ENCODE measurements at regions of chr12 and their contacts with region 1.

Region 1: DNA sequence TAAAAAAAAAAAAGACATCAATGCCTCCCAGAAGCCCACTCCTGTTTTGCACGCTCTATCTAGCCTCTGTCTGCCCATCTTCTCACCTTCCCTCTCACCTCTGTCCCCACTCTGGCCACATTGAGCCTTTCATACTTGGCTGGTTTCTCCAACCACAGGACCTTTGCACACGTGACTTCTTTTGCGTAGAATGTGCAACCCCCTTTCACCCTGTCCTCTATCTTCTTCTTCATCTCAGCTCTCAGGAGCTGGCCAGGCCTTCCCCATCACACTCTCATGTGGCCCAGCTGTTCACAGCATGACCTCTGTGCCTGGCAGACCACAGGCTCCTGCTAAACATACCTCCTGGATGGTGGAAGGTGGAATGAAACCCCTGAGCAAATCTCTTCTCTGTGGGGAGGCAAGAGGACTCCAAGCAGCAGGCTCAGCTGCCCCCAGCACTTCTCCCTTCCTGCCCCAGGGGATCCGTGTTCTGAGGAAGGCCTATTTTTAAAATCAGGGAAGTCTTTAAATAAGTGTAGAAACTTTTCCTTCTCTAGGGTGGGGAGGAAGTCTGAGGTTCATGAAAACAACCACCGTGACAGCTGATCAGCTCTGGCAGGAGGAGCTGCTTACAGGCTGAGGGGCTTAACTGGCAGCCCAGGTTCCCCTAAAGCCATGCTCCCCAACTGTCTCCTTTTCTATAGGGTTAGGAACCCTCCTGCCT is 11.6 kb downstream of the HVCN1 start:
- DNase-seq: peak; percentile 97
- ATAC-seq: peak; percentile 89
- H3K4me3 ChIP-seq: peak overlapping the region; percentile 42
- H3K27ac ChIP-seq: peak overlapping the region; percentile 87
- H3K4me1 ChIP-seq: peaks cover 72% of the 10 kb centered on the region
- H3K27me3 ChIP-seq: no peaks in the 10 kb centered on the region
- CTCF ChIP-seq: no peak
- EP300 ChIP-seq: peak; percentile 50 to 81; a peak in 3 of 4 replicates
- POLR2A ChIP-seq: 0 out of 2 replicates have a peak, but pooled peaks have one; percentile 38
- RAD21 ChIP-seq: no peak

Region 2: DNA sequence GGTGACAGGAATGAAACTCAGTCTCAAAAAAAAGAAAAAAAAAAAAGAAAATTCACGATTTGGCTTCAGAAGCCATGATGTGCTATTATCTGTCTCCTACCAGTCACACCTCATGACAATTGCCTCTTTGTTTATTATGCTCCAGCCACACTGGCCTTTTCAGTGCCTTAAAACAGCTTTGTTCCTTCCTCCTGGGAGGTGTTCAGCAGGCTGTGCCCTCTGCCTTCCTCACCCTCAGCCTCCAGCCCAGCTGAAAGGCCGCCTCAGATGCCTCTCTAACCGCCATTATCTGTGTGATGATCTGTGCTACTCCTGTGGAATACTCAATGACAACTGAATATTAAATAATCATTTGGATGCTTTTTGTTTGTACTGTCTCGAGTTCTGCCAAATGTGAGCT is 218.6 kb before region 1 on chr12:
- CTCF ChIA-PET with region 1: no interaction called
- POLR2A ChIA-PET with region 1: interaction called, 10 read pairs
- RAD21 ChIA-PET with region 1: no interaction called
- SMC1A ChIA-PET with region 1: no interaction called
- in situ Hi-C with region 1: no loop called
- intact Hi-C with region 1: no loop called
- DNase-seq: no peak
- ATAC-seq: no peak
- H3K4me3 ChIP-seq: no peak overlapping the region
- H3K27ac ChIP-seq: no peak overlapping the region
- H3K4me1 ChIP-seq: peaks cover 17% of the 10 kb centered on the region
- H3K27me3 ChIP-seq: no peaks in the 10 kb centered on the region
- CTCF ChIP-seq: no peak
- EP300 ChIP-seq: no peak
- POLR2A ChIP-seq: no peak
- RAD21 ChIP-seq: no peak

Region 3: GRCh38 chr12:110627500-110628195 is 49.7 kb before region 1 on chr12:
- CTCF ChIA-PET with region 1: no interaction called
- POLR2A ChIA-PET with region 1: interaction called, 3 read pairs
- RAD21 ChIA-PET with region 1: interaction called, 6 read pairs
- SMC1A ChIA-PET with region 1: interaction called, 11 read pairs
- in situ Hi-C with region 1: no loop called
- intact Hi-C with region 1: no loop called
- DNase-seq: no peak
- ATAC-seq: peak; percentile 77
- H3K4me3 ChIP-seq: peak overlapping the region; percentile 23; the same call in 1 of the 2 replicates
- H3K27ac ChIP-seq: peak overlapping the region; percentile 16
- H3K4me1 ChIP-seq: peaks cover 11% of the 10 kb centered on the region
- H3K27me3 ChIP-seq: no peaks in the 10 kb centered on the region
- CTCF ChIP-seq: no peak
- EP300 ChIP-seq: no peak
- POLR2A ChIP-seq: no peak
- RAD21 ChIP-seq: no peak

Region 4: DNA sequence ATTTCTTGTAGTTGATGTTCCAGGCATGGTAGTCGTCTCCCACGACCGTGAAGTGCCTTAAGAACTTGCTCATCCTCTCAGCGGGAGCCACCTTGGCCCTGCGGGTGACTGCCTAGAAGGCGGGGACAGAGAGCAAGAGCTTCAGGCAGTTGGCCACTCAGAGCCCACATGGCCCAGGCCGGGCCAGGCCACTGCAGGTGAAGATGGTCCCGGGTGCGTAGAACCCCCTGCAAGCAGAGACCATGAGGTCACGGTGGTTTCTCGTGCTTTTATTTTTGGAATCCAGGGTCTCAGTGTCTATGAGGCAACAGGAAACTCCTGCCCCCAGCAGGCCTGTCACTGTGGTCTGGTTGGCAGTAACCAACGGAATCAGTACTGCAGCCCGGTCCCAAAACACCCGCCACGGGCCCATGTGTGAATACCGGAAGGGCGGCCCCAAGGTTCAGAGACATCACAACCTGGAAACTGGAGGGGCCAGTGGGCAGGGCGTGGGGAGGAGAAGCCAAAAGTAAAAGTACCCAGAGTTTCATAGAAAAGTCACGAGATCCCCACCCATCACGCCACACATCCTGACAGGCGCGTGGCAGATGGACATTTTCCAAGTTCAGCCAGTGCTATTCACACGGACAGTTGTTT is 15.9 kb before region 1 on chr12:
- CTCF ChIA-PET with region 1: interaction called, 12 read pairs
- POLR2A ChIA-PET with region 1: interaction called, 78 read pairs
- RAD21 ChIA-PET with region 1: interaction called, 42 read pairs
- SMC1A ChIA-PET with region 1: interaction called, 80 read pairs
- in situ Hi-C with region 1: no loop called
- intact Hi-C with region 1: no loop called
- DNase-seq: peak; percentile 92
- ATAC-seq: peak; percentile 95
- H3K4me3 ChIP-seq: peak overlapping the region; percentile 65
- H3K27ac ChIP-seq: peak overlapping the region; percentile 88
- H3K4me1 ChIP-seq: peaks cover 44% of the 10 kb centered on the region
- H3K27me3 ChIP-seq: no peaks in the 10 kb centered on the region
- CTCF ChIP-seq: no peak
- EP300 ChIP-seq: peak; percentile 90 to 97
- POLR2A ChIP-seq: peak; percentile 82
- RAD21 ChIP-seq: peak; percentile 18; the same call in 1 of the 2 replicates

Region 5: DNA sequence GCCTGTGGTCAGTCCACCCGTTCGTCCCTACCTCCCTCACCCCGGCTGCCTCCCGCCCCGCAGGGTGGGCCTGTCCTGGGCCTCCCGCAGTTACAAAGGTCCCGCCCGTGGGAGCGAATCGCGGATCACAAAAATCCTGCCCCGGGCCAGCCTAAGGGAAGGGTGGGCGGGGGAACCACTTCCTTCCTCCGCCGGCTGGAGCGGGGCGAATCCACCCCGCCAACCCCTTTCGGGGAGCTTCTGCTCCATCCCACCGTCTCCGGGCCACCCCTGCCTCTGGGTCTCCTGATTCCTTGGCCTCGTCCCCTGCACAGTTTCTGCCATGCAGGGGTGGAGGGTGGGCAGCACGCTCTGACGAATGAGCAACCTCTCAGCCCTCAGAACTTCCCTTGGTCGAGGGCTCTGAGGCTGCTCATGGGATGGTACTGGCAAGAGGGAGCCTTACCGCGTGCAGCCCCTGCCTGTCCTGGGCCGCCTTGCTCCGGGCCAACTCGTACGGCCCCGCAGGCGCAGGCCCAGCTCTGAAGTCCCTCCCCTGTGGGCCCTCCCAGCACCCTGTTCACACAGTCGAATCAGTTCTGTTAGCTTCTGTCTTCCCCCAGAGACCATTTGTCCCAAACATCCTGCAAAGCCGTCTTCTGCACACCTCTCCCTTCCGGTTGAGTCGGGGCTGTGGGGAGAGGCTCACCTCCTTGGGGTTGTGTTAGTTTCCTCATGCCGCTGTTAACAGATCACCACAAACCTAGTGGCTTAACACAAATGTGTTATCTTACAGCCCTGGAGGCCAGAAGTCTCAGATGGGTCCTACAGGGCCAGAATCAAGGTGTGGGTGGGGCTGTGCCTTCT is 12.1 kb after region 1 on chr12:
- CTCF ChIA-PET with region 1: interaction called, 6 read pairs
- POLR2A ChIA-PET with region 1: interaction called, 80 read pairs
- RAD21 ChIA-PET with region 1: interaction called, 27 read pairs
- SMC1A ChIA-PET with region 1: interaction called, 52 read pairs
- in situ Hi-C with region 1: no loop called
- intact Hi-C with region 1: loop called (anchors 1 kb)
- DNase-seq: peak; percentile 57
- ATAC-seq: peak; percentile 75
- H3K4me3 ChIP-seq: peak overlapping the region; percentile 66
- H3K27ac ChIP-seq: peak overlapping the region; percentile 85
- H3K4me1 ChIP-seq: peaks cover 38% of the 10 kb centered on the region
- H3K27me3 ChIP-seq: no peaks in the 10 kb centered on the region
- CTCF ChIP-seq: no peak
- EP300 ChIP-seq: no peak
- POLR2A ChIP-seq: peak; percentile 89
- RAD21 ChIP-seq: no peak

Region 6: DNA sequence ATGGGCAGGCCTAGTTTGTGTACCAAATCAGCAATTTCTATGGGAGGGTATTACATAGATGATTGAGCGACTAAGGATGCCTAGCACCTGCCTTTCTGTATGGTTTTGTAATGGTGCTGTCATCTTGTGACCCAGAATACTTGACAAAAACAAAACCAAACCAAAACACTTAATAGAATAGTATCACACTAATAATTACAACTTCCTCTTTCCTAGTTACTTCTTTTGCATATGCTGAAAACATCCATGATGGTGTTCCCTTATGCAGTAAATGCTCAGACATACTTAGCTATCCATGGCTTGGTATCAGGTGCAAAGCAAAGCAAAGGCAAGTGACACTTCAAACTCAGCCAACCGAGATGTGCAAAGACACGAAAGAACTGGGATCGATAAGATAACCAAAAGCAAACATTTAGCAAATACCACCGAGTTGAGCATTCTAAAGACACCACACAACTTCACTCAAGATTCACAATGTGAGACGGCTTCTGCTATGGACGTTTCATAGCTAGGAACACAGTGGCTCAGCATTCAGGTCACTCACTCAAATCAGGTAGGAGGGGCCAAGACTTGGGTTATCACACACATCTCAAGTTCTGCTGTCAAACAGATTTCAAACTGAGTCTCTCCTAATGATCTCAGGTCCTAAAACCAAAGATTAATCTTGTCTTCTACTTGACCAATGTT is 41.0 kb after region 1 on chr12:
- CTCF ChIA-PET with region 1: no interaction called
- POLR2A ChIA-PET with region 1: no interaction called
- RAD21 ChIA-PET with region 1: no interaction called
- SMC1A ChIA-PET with region 1: no interaction called
- in situ Hi-C with region 1: no loop called
- intact Hi-C with region 1: no loop called
- DNase-seq: no peak
- ATAC-seq: peak; percentile 83
- H3K4me3 ChIP-seq: no peak overlapping the region
- H3K27ac ChIP-seq: no peak overlapping the region
- H3K4me1 ChIP-seq: peaks cover 3% of the 10 kb centered on the region; the same call in 1 of the 2 replicates
- H3K27me3 ChIP-seq: no peaks in the 10 kb centered on the region
- CTCF ChIP-seq: no peak
- EP300 ChIP-seq: 0 out of 4 replicates have a peak, but pooled peaks of 1 of the 2 experiments have one; percentile 11
- POLR2A ChIP-seq: no peak
- RAD21 ChIP-seq: no peak

Region 7: DNA sequence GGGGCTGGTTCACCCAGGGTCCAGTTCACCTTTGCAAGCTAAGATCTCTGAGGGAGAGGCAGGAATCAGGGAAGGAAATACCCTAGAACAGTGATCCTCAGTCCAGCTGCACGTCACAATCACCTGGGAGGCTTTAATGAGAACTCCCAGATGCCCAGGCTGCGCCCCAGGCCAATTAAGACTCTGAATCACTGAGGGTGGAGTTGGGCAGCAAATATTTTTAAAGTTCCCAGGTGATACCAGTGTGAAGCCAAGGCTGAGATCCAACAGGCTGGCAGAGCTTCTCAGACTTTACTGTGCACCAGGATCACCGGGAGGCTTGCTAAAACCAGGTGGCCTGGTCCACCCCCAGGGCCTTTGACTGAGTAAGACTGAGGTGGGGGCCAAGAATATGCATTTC is 219.2 kb after region 1 on chr12:
- CTCF ChIA-PET with region 1: no interaction called
- POLR2A ChIA-PET with region 1: no interaction called
- RAD21 ChIA-PET with region 1: no interaction called
- SMC1A ChIA-PET with region 1: no interaction called
- in situ Hi-C with region 1: no loop called
- intact Hi-C with region 1: no loop called
- DNase-seq: no peak
- ATAC-seq: no peak
- H3K4me3 ChIP-seq: no peak overlapping the region
- H3K27ac ChIP-seq: no peak overlapping the region
- H3K4me1 ChIP-seq: no peaks in the 10 kb centered on the region
- H3K27me3 ChIP-seq: no peaks in the 10 kb centered on the region; a peak in 1 of 4 replicates
- CTCF ChIP-seq: no peak
- EP300 ChIP-seq: no peak
- POLR2A ChIP-seq: no peak
- RAD21 ChIP-seq: no peak

Measured in GM12878 (cell line).